Transverse colon (tissue), 4 donors: ENCODE measurements at regions of chr11 and their contacts with region 1.

Region 1: GRCh38 chr11:131614631-131615030 is 244.2 kb downstream of the NTM start:
- DNase-seq: no peak
- H3K4me3 ChIP-seq: no peak overlapping the region
- H3K27ac ChIP-seq: no peak overlapping the region
- H3K4me1 ChIP-seq: no peaks in the 10 kb centered on the region
- H3K27me3 ChIP-seq: no peaks in the 10 kb centered on the region
- CTCF ChIP-seq: no peak
- EP300 ChIP-seq: no peak
- POLR2A ChIP-seq: no peak

Region 2: DNA sequence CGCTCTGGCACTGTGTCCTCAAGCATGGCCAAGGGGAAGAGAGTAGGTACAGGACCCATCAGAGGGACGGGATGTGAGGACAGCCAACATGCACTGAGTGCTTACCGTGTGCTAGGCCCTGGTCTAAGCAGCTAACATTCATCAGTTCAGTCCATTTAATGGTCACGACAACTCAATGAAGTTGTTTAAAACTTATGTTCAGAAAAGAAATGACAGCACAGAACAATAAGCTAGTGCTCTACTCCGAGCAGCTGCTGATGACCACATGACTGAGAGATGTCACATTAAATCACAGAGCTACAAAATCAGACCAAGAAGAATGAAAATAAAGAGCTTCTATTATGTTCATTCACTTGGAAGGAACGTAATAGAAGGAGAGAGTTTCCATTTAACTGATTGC is 1638.3 kb before region 1 on chr11:
- in situ Hi-C with region 1: no loop called
- intact Hi-C with region 1: loop called (anchors 5 kb)
- DNase-seq: no peak
- H3K4me3 ChIP-seq: no peak overlapping the region
- H3K27ac ChIP-seq: no peak overlapping the region
- H3K4me1 ChIP-seq: peaks cover 0 to 6% (median 3%) of the 10 kb centered on the region in 4 donors
- H3K27me3 ChIP-seq: no peaks in the 10 kb centered on the region
- CTCF ChIP-seq: no peak
- EP300 ChIP-seq: no peak
- POLR2A ChIP-seq: no peak